ENCODE measurements at regions of chr6 and their contacts with region 1.

Region 1: GRCh38 chr6:5497896-5498578 is 236.7 kb downstream of the FARS2 start:
- DNase-seq: peak; percentile 80
- ATAC-seq: peak; percentile 67
- H3K4me3 ChIP-seq: peak overlapping the region; percentile 64
- H3K27ac ChIP-seq: peak overlapping the region; percentile 83
- H3K4me1 ChIP-seq: peaks cover 26% of the 10 kb centered on the region
- H3K27me3 ChIP-seq: no peaks in the 10 kb centered on the region
- CTCF ChIP-seq: no peak

Region 2: DNA sequence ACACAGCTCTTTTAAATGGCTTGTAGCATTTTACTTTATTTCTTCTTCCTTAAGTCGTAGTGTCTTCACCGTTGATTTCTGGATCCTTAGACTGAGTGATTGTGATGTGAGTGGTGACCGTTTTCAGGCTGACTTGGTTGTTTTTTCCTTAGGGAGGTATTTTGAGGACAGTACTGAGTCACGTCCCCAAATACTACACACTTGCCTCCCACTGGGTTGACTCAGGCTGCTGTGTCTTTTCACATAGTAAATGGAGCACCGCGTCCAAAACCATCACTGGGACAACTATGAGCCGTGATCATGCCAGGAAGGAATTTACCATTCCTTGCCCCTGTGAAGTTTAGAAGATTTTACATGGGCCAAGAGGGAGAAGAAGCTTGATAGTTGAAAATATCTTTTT is 62.6 kb before region 1 on chr6:
- CTCF ChIA-PET with region 1: no interaction called
- POLR2A ChIA-PET with region 1: no interaction called
- intact Hi-C with region 1: no loop called
- DNase-seq: peak; percentile 80
- ATAC-seq: peak; percentile 86
- H3K4me3 ChIP-seq: no peak overlapping the region
- H3K27ac ChIP-seq: peak overlapping the region; percentile 63
- H3K4me1 ChIP-seq: peaks cover 35% of the 10 kb centered on the region
- H3K27me3 ChIP-seq: no peaks in the 10 kb centered on the region
- CTCF ChIP-seq: no peak

Region 3: DNA sequence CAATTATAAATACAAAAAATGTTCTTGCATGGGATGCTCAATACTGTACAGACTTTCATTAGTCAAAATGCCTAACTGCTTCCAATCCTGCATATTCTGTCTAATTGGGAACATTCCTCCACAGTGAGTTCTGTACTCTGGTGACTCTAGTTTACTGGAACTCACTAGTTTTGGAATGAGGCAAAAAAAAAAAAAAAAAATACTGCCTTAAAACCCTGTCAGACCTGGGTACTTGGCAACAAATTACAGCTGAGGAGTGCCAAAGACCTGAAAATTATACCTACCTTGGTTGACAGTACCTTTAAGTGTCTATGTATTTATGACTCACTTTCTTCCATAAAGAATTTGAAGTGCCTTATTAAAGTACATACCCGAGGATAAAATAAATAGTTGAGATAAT is 39.9 kb after region 1 on chr6:
- CTCF ChIA-PET with region 1: no interaction called
- POLR2A ChIA-PET with region 1: no interaction called
- intact Hi-C with region 1: loop called (anchors 2 kb)
- DNase-seq: peak; percentile 78
- ATAC-seq: peak; percentile 89
- H3K4me3 ChIP-seq: no peak overlapping the region; the same call in 1 of the 2 replicates
- H3K27ac ChIP-seq: peak overlapping the region; percentile 64
- H3K4me1 ChIP-seq: peaks cover 40% of the 10 kb centered on the region
- H3K27me3 ChIP-seq: no peaks in the 10 kb centered on the region
- CTCF ChIP-seq: no peak

Region 4: DNA sequence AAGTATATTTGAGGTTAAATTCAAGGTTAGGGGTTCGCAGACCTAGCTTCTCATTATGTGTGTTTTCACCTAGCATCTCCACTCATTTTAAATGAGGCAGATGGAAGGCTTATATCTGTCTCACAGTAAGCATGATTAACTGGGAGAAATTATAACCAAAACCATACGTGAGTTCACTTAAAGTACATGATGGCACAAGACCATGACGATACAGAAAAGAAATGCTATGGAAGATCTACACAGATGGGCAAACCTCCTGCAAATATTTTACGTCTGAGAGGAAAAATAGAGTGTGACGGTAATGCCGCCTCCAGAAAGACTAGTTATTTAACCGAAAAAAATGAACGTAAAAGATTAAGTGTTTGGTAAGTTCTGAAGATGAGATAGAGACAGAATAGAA is 101.1 kb after region 1 on chr6:
- CTCF ChIA-PET with region 1: no interaction called
- POLR2A ChIA-PET with region 1: no interaction called
- intact Hi-C with region 1: no loop called
- DNase-seq: no peak
- ATAC-seq: no peak
- H3K4me3 ChIP-seq: no peak overlapping the region
- H3K27ac ChIP-seq: no peak overlapping the region
- H3K4me1 ChIP-seq: no peaks in the 10 kb centered on the region
- H3K27me3 ChIP-seq: no peaks in the 10 kb centered on the region
- CTCF ChIP-seq: no peak

Measured in PC-3 (cell line).